ENCODE measurements at regions of chr2 and their contacts with region 1.

Region 1: GRCh38 chr2:72862239-72862988 is 24.8 kb upstream of the SPR start:
- DNase-seq: peak; percentile 92
- ATAC-seq: peak; percentile 98 to 99
- H3K4me3 ChIP-seq: peak overlapping the region; percentile 17
- H3K27ac ChIP-seq: no peak overlapping the region
- H3K4me1 ChIP-seq: peaks cover 8% of the 10 kb centered on the region
- H3K27me3 ChIP-seq: peaks cover 11% of the 10 kb centered on the region
- CTCF ChIP-seq: peak; percentile 99

Region 2: GRCh38 chr2:72770879-72771461 is 91.4 kb before region 1 on chr2:
- intact Hi-C with region 1: loop called (anchors 5 kb)
- DNase-seq: no peak
- ATAC-seq: peak; percentile 63 to 67
- H3K4me3 ChIP-seq: no peak overlapping the region
- H3K27ac ChIP-seq: no peak overlapping the region
- H3K4me1 ChIP-seq: no peaks in the 10 kb centered on the region
- H3K27me3 ChIP-seq: no peaks in the 10 kb centered on the region
- CTCF ChIP-seq: peak; percentile 84